Common myeloid progenitor, CD34-positive (primary cell): ENCODE measurements at regions of chr10 and their contacts with region 1.

Region 1: GRCh38 chr10:101238732-101239105 is 9.5 kb upstream of the LBX1 start:
- DNase-seq: peak; percentile 44 to 62 (median 62)
- H3K4me3 ChIP-seq: no peak overlapping the region
- H3K27ac ChIP-seq: no peak overlapping the region
- H3K4me1 ChIP-seq: peaks cover 0 to 7% (median under 1%) of the 10 kb centered on the region in 4 experiments
- H3K27me3 ChIP-seq: peaks cover 39 to 98% (median 51%) of the 10 kb centered on the region in 5 experiments

Region 2: GRCh38 chr10:101095542-101096213 is 143.0 kb before region 1 on chr10:
- CTCF ChIA-PET with region 1: no interaction called
- POLR2A ChIA-PET with region 1: no interaction called
- DNase-seq: peak; percentile 57 to 72 (median 60)
- H3K4me3 ChIP-seq: no peak overlapping the region
- H3K27ac ChIP-seq: no peak overlapping the region
- H3K4me1 ChIP-seq: no peaks in the 10 kb centered on the region
- H3K27me3 ChIP-seq: peaks cover 2 to 88% (median 23%) of the 10 kb centered on the region in 5 experiments

Region 3: DNA sequence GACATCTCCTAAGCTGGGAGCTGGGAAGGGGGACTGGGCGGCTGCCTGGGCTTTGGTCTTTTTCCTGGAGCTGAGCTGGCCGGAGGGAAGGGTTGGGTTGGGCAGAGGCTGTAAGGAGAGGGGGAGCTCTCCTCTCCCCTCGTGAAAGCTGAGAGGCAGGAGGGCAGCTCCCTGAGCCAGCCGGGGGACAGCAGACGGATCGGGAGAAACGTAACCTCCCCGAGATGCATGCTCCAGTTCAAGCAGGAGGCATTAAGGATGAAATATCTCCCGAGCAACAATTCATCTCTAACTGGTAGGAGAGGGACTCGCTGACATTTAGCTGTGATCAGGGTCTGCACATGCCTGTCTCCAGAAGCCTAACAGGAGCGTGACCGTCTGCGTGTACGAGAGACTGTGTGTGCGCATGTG is 10.5 kb after region 1 on chr10:
- CTCF ChIA-PET with region 1: interaction called, 21 read pairs
- POLR2A ChIA-PET with region 1: no interaction called
- DNase-seq: no peak
- H3K4me3 ChIP-seq: no peak overlapping the region
- H3K27ac ChIP-seq: no peak overlapping the region
- H3K4me1 ChIP-seq: no peaks in the 10 kb centered on the region
- H3K27me3 ChIP-seq: peaks cover 10 to 92% (median 25%) of the 10 kb centered on the region in 5 experiments

Region 4: GRCh38 chr10:101272229-101272868 is 33.6 kb after region 1 on chr10:
- CTCF ChIA-PET with region 1: interaction called, 10 read pairs
- POLR2A ChIA-PET with region 1: no interaction called
- DNase-seq: peak; percentile 56 to 76 (median 63)
- H3K4me3 ChIP-seq: no peak overlapping the region
- H3K27ac ChIP-seq: no peak overlapping the region
- H3K4me1 ChIP-seq: no peaks in the 10 kb centered on the region
- H3K27me3 ChIP-seq: peaks cover 3 to 46% (median 22%) of the 10 kb centered on the region in 5 experiments

Region 5: DNA sequence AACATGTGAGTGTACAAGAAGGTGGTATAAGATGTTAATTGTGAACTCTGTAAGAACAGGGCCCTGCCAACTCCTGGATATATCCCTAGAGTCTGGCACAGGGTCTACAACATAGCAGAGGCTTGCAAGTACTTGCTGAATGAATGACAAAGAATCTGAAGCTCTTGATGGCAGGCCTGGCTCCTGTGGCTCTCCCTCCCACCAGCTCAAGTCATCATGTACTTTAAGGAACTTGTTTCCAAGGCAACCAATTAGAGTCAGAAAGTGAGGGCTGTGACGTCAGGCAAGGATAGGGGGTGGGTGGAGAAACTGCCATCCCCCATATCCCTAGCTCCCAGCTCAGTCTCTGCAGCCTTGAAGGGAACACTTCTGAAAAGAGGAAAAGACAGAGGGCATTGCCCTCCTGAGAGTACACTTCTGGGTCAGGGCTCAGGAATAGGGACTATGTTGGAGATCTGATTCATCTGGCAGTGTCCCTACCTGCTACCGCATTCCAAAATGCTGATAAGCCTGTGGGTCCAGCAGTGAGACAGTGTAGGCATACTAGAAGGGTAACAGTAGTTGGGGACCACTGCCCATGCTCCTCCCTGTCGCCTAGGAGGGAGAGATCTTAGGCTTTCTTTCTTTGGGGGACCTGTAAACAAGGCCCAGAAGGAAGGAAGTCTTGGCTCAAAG is 80.7 kb after region 1 on chr10:
- CTCF ChIA-PET with region 1: no interaction called
- POLR2A ChIA-PET with region 1: no interaction called
- DNase-seq: peak in 2 of 3 donors; percentile 11 to 15
- H3K4me3 ChIP-seq: no peak overlapping the region
- H3K27ac ChIP-seq: no peak overlapping the region
- H3K4me1 ChIP-seq: no peaks in the 10 kb centered on the region
- H3K27me3 ChIP-seq: peaks cover 0 to 17% (median 6%) of the 10 kb centered on the region in 5 experiments